Activated naive CD4-positive, alpha-beta T cell treated with anti-CD3 and anti-CD28 coated beads for 36 hours (primary cell): ENCODE measurements at regions of chr13 and their contacts with region 1.

Region 1: GRCh38 chr13:98570929-98571372 is 6.0 kb downstream of the STK24 start:
- DNase-seq: peak; percentile 62
- H3K4me3 Mint-ChIP-seq: peak overlapping the region; percentile 76
- H3K27ac Mint-ChIP-seq: peak overlapping the region; percentile 80
- H3K4me1 Mint-ChIP-seq: peaks cover 86% of the 10 kb centered on the region
- H3K27me3 Mint-ChIP-seq: no peaks in the 10 kb centered on the region

Region 2: GRCh38 chr13:99041788-99042187 is 470.8 kb after region 1 on chr13:
- CTCF ChIA-PET with region 1: no interaction called
- intact Hi-C with region 1: loop called (anchors 5 kb)
- DNase-seq: no peak
- H3K4me3 Mint-ChIP-seq: no peak overlapping the region
- H3K27ac Mint-ChIP-seq: no peak overlapping the region
- H3K4me1 Mint-ChIP-seq: peaks cover 80% of the 10 kb centered on the region
- H3K27me3 Mint-ChIP-seq: no peaks in the 10 kb centered on the region